CD8-positive, alpha-beta T cell (primary cell): ENCODE measurements at regions of chr9 and their contacts with region 1.

Region 1: DNA sequence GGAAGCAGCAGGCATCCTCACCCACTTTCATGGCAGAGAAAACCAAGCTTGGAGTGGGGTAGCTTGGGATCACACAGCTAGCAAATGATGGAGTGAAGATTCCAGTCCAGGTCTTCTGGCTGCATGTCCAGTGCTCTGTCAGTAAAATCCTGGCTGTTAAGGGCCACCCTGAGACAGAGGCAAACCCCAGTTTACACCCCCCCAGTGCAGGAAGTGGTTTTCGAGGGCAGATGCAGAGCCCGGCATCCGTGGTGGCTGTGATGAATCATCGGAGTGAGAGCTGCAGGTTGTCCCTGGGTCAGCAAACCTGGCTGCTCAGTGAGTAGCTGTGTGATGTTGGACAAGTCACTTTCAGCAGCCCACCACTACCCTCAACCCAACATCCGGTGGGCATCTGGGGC is 115.4 kb downstream of the RGS3 start:
- DNase-seq: peak; percentile 50 to 92 (median 87)
- ATAC-seq: peak; percentile 56
- H3K4me3 ChIP-seq: peak overlapping the region; percentile 15 to 24
- H3K4me3 Mint-ChIP-seq: peak overlapping the region; percentile 79
- H3K27ac ChIP-seq: peak overlapping the region; percentile 37 to 76
- H3K27ac Mint-ChIP-seq: peak overlapping the region; percentile 94
- H3K4me1 ChIP-seq: peaks cover 57% of the 10 kb centered on the region
- H3K4me1 Mint-ChIP-seq: peaks cover 81% of the 10 kb centered on the region
- H3K27me3 ChIP-seq: no peaks in the 10 kb centered on the region
- H3K27me3 Mint-ChIP-seq: no peaks in the 10 kb centered on the region
- CTCF ChIP-seq: no peak

Region 2: DNA sequence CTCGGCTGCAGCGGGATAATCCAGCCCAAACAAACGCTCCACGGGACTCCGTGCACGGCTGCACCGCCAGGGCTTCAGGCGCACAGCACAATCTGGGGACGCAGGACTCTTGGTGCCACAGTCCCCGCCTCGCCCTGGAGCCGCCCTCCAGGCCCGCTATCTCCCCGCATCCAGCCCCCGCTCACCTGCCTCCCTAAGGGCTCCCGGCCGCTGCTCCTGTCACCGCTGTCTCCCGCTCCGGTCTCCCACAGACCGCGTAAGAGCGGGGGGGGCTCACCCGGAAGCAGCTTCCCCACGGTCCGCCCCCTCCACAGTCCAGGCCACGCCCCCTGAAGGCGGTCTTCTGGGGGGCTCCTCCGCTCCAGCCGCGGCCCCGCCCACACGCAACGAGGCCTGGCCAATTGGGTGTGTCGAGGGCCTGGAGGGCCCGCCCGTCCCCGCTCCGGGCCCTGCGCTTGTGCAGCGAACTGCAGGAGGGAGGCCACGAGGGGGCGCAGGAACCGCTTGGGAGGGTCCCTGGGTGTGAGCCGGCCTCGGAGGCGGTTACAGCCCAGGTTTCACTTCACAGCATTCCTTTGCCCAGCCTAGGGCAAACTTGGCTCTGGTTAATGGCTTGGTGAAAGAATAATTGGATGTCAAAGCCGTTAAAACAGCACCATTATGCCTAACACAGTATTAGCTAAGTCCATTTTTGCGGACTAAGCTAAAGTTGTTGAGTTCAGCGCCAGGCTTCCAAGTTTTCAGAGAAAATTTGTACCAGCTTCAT is 177.7 kb before region 1 on chr9 and contains the start of gene ALAD:
- CTCF ChIA-PET with region 1: interaction called, 14 read pairs
- POLR2A ChIA-PET with region 1: interaction called, 7 read pairs
- intact Hi-C with region 1: loop called (anchors 1 kb)
- DNase-seq: peak; percentile 98 to 100 (median 100)
- ATAC-seq: peak; percentile 99
- H3K4me3 ChIP-seq: peak within 1 kb of the TSS; percentile 80 to 81
- H3K4me3 Mint-ChIP-seq: peak within 1 kb of the TSS; percentile 97
- H3K27ac ChIP-seq: peak within 1 kb of the TSS; percentile 53
- H3K27ac Mint-ChIP-seq: peak within 1 kb of the TSS; percentile 92
- H3K4me1 ChIP-seq: peaks cover 16% of the 10 kb centered on the region
- H3K4me1 Mint-ChIP-seq: peaks cover 28% of the 10 kb centered on the region
- H3K27me3 ChIP-seq: no peaks in the 10 kb centered on the region
- H3K27me3 Mint-ChIP-seq: no peaks in the 10 kb centered on the region
- CTCF ChIP-seq: peak; percentile 94
- total RNA-seq, gene ALAD: 11.2 to 11.5 TPM

Region 3: GRCh38 chr9:113511856-113512761 is 66.8 kb before region 1 on chr9:
- CTCF ChIA-PET with region 1: interaction called, 16 read pairs
- POLR2A ChIA-PET with region 1: interaction called, 27 read pairs
- intact Hi-C with region 1: loop called (anchors 1 kb)
- DNase-seq: peak; percentile 41 to 89 (median 77)
- ATAC-seq: peak; percentile 68
- H3K4me3 ChIP-seq: peak overlapping the region; percentile 16 to 26
- H3K4me3 Mint-ChIP-seq: peak overlapping the region; percentile 74
- H3K27ac ChIP-seq: peak overlapping the region; percentile 60 to 65
- H3K27ac Mint-ChIP-seq: peak overlapping the region; percentile 90
- H3K4me1 ChIP-seq: peaks cover 59% of the 10 kb centered on the region
- H3K4me1 Mint-ChIP-seq: peaks cover 68% of the 10 kb centered on the region
- H3K27me3 ChIP-seq: no peaks in the 10 kb centered on the region
- H3K27me3 Mint-ChIP-seq: no peaks in the 10 kb centered on the region
- CTCF ChIP-seq: no peak

Region 4: DNA sequence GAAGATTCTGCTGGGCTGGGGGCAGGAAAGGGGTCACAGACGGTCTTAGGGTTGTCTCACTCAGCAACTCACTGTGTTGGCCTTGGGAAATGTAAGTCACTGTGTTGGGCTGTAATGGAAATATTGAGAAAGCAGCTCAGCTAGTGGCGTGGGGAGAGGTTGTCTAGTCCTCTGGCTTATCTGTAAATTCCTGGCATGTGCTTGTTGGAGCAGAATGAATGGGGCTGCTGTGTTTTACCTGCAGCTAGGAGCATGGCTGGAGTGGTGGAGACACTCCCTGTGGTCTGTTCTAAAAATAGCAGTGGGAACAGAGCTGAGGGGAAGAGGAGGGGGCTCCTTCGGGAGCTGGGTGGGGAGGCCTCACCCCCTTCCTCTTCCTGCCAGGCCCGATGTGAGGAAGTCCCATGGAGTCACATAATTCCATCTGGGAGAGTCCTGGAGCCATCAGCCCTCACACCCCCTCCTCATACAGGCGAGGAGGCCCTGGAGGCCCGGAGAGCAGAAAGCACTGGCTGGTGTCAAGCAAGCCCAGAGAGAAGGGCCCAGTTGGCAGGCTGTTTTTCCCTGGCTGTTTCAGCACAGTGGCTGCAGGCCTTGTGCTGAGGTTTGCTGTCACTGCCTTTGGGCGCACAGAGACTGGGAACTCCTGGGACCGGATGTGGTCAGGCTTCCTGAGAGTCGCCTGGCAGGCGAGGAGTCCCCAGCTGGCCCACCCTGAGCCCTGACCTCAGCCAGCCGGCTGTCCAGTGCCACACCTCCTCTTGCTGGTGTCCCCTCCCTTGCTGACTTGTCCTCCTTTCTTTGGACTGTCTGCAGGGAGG is 30.5 kb before region 1 on chr9:
- CTCF ChIA-PET with region 1: no interaction called
- POLR2A ChIA-PET with region 1: interaction called, 5 read pairs
- intact Hi-C with region 1: loop called in 1 of 2 experiments (anchors 5 kb)
- DNase-seq: peak in 2 of 9 experiments; percentile 29 to 43
- ATAC-seq: peak; percentile 23
- H3K4me3 ChIP-seq: no peak overlapping the region
- H3K4me3 Mint-ChIP-seq: peak overlapping the region; percentile 20
- H3K27ac ChIP-seq: peak overlapping the region; percentile 12 to 67
- H3K27ac Mint-ChIP-seq: peak overlapping the region; percentile 89
- H3K4me1 ChIP-seq: peaks cover 27% of the 10 kb centered on the region
- H3K4me1 Mint-ChIP-seq: peaks cover 55% of the 10 kb centered on the region
- H3K27me3 ChIP-seq: no peaks in the 10 kb centered on the region
- H3K27me3 Mint-ChIP-seq: no peaks in the 10 kb centered on the region
- CTCF ChIP-seq: no peak